ENCODE measurements at regions of chr4 and their contacts with region 1.

Region 1: DNA sequence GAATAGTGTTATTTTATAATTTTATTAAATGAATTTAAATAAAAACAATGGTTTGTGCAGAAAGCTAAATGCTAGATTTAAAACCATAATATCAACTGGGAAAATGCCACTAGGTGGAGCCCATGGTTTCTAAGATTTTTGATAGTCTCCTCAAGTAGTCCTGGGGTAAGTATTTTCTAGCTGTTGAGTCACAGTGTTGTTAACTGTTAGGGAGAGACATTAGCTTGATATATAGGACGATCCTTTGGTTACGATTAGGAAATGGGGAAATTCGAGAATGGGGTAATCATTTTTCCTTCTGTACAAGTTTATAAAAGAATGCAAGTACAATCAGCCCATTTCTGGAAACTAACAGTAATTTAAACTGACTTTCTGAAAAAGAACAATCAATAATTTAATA is 378.4 kb downstream of the ANKRD50 start:
- DNase-seq: peak; percentile 17
- H3K4me3 ChIP-seq: no peak overlapping the region
- H3K27ac ChIP-seq: no peak overlapping the region
- H3K4me1 ChIP-seq: no peaks in the 10 kb centered on the region
- CTCF ChIP-seq: peak; percentile 73

Region 2: GRCh38 chr4:125283707-125284279 is 949.7 kb after region 1 on chr4:
- CTCF ChIA-PET with region 1: no interaction called
- POLR2A ChIA-PET with region 1: no interaction called
- intact Hi-C with region 1: loop called (anchors 5 kb)
- DNase-seq: peak; percentile 25
- H3K4me3 ChIP-seq: no peak overlapping the region
- H3K27ac ChIP-seq: no peak overlapping the region
- H3K4me1 ChIP-seq: no peaks in the 10 kb centered on the region
- CTCF ChIP-seq: peak; percentile 85